Naive thymus-derived CD4-positive, alpha-beta T cell (primary cell): ENCODE measurements at regions of chr1 and their contacts with region 1.

Region 1: GRCh38 chr1:148263128-148263905 is 111.2 kb upstream of the NBPF11 start:
- DNase-seq: peak; percentile 27 to 65 (median 51)
- ATAC-seq: peak; percentile 90
- H3K4me3 ChIP-seq: peak overlapping the region; percentile 59
- H3K4me3 Mint-ChIP-seq: peak overlapping the region; percentile 89 to 97 (median 93)
- H3K27ac ChIP-seq: peak overlapping the region; percentile 76
- H3K27ac Mint-ChIP-seq: peak overlapping the region; percentile 88 to 97 (median 93)
- H3K4me1 ChIP-seq: no peaks in the 10 kb centered on the region
- H3K4me1 Mint-ChIP-seq: peaks cover 10 to 23% (median 13%) of the 10 kb centered on the region in 7 donors
- H3K27me3 ChIP-seq: no peaks in the 10 kb centered on the region
- H3K27me3 Mint-ChIP-seq: peaks cover 0 to 50% (median 0%) of the 10 kb centered on the region in 5 donors

Region 2: GRCh38 chr1:148334339-148335130 is 71.2 kb after region 1 on chr1:
- CTCF ChIA-PET with region 1: no interaction called
- POLR2A ChIA-PET with region 1: interaction called, 9 read pairs
- intact Hi-C with region 1: loop called in 1 of 2 experiments (anchors 1 kb)
- DNase-seq: peak; percentile 40 to 74 (median 65)
- ATAC-seq: peak; percentile 84
- H3K4me3 ChIP-seq: peak overlapping the region; percentile 86
- H3K4me3 Mint-ChIP-seq: peak overlapping the region; percentile 84 to 99 (median 96)
- H3K27ac ChIP-seq: peak overlapping the region; percentile 78
- H3K27ac Mint-ChIP-seq: peak overlapping the region; percentile 89 to 99 (median 97)
- H3K4me1 ChIP-seq: peaks cover 5 to 12% of the 10 kb centered on the region in 2 donors
- H3K4me1 Mint-ChIP-seq: peaks cover 24 to 42% (median 34%) of the 10 kb centered on the region in 7 donors
- H3K27me3 ChIP-seq: no peaks in the 10 kb centered on the region
- H3K27me3 Mint-ChIP-seq: peaks cover 3 to 68% (median 14%) of the 10 kb centered on the region in 5 donors